ENCODE measurements at regions of chr14 and their contacts with region 1.

Region 1: GRCh38 chr14:51651388-51652167 is at the start of gene FRMD6:
- DNase-seq: peak; percentile 82
- ATAC-seq: peak; percentile 88
- H3K4me3 Mint-ChIP-seq: peak within 1 kb of the TSS; percentile 80
- H3K27ac Mint-ChIP-seq: peak within 1 kb of the TSS; percentile 79
- H3K4me1 Mint-ChIP-seq: peaks cover 23% of the 10 kb centered on the region
- H3K27me3 Mint-ChIP-seq: peaks cover 21% of the 10 kb centered on the region
- CTCF ChIP-seq: peak; percentile 80
- total RNA-seq, gene FRMD6: 2.7 to 4.9 TPM

Region 2: GRCh38 chr14:51609955-51610283 is 41.7 kb before region 1 on chr14:
- CTCF ChIA-PET with region 1: no interaction called
- POLR2A ChIA-PET with region 1: no interaction called
- intact Hi-C with region 1: no loop called
- DNase-seq: no peak
- ATAC-seq: no peak
- H3K4me3 Mint-ChIP-seq: no peak overlapping the region
- H3K27ac Mint-ChIP-seq: no peak overlapping the region
- H3K4me1 Mint-ChIP-seq: peaks cover 13% of the 10 kb centered on the region
- H3K27me3 Mint-ChIP-seq: peaks cover 7% of the 10 kb centered on the region
- CTCF ChIP-seq: no peak

Region 3: GRCh38 chr14:51677266-51677665 is 25.7 kb after region 1 on chr14:
- CTCF ChIA-PET with region 1: interaction called, 11 read pairs
- POLR2A ChIA-PET with region 1: no interaction called
- intact Hi-C with region 1: no loop called
- DNase-seq: no peak
- ATAC-seq: no peak
- H3K4me3 Mint-ChIP-seq: no peak overlapping the region
- H3K27ac Mint-ChIP-seq: no peak overlapping the region
- H3K4me1 Mint-ChIP-seq: peaks cover 17% of the 10 kb centered on the region
- H3K27me3 Mint-ChIP-seq: peaks cover 8% of the 10 kb centered on the region
- CTCF ChIP-seq: no peak

Region 4: GRCh38 chr14:51682411-51682810 is 30.8 kb after region 1 on chr14:
- CTCF ChIA-PET with region 1: interaction called, 11 read pairs
- POLR2A ChIA-PET with region 1: no interaction called
- intact Hi-C with region 1: no loop called
- DNase-seq: no peak
- ATAC-seq: no peak
- H3K4me3 Mint-ChIP-seq: no peak overlapping the region
- H3K27ac Mint-ChIP-seq: no peak overlapping the region
- H3K4me1 Mint-ChIP-seq: peaks cover 5% of the 10 kb centered on the region
- H3K27me3 Mint-ChIP-seq: peaks cover 6% of the 10 kb centered on the region
- CTCF ChIP-seq: no peak

Measured in activated CD8-positive, alpha-beta T cell treated with anti-CD3 and anti-CD28 coated beads for 36 hours (primary cell).